ENCODE measurements at regions of chr6 and their contacts with region 1.

Region 1: DNA sequence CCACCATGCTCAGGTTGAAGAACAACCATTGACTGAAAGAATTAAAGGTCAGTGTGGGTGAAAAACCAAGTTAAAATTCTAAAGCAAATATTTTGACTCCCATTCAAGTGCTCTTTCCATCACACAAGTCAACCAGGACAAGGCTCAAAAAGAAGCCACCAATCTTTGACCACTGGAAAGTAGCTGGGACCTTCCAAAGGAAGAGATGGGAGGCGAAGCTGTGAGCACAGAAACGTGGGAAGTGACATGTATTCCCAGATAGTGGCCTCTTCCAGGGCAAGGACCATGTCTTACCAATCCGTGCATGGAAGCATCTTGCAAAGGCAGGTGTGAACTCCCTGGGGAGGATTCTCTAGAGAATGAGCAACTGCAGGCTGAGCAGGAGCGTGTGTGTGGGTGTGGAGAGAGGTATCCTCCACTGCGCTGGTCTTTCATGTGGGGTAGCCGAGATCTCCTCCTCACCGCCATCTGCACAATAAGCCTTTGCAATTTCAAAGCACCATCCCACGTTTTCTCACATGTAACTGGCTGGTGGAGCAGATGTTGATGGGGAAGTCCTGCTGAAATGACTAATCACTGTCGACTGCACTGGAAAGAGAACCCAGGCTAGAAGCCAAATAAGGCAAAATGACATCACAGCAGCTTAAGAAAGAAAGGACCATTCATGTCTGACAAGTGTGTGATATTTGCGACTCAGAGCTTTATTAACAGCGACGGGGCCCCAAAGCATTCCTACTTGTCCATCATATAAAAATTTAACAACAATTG is 189.4 kb upstream of the RREB1 start:
- DNase-seq: peak; percentile 44
- H3K4me3 Mint-ChIP-seq: no peak overlapping the region
- H3K27ac Mint-ChIP-seq: peak overlapping the region; percentile 55
- H3K4me1 Mint-ChIP-seq: peaks cover 37% of the 10 kb centered on the region
- H3K27me3 Mint-ChIP-seq: peaks cover 18% of the 10 kb centered on the region

Region 2: DNA sequence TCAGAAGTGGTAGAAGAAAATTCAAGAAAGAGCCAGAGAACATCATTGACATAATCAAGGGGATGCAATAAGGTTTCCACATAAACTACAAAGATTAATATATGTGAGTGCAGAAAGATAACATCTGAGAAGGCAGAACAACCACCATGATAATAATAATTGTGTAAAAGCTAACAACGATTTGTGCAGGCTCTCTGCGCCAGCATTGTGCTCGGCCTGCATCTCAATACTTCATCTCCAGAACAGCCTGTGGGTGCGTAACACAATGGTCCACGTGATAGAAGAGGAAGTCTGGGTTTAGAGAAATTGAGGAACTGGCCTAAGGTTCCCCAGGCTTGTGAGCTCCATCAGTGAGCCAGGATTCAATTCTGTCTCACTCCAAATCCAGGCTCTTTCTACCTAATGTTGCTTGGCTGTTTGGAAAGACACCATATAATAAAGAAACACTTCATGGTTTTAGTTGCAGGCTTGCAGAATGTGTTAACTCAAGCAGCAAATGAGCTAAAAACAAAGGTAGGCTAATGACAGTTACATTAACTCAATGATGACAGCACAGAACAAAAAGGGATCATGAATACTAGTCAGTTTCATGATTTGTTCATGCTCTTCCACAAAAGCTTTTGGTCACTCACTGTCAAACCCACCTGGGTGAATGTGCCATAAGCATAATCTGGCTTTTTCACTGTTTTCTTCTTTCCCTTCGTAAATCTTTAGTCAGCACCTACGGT is 258.6 kb before region 1 on chr6:
- intact Hi-C with region 1: loop called (anchors 1 kb)
- DNase-seq: no peak
- H3K4me3 Mint-ChIP-seq: no peak overlapping the region
- H3K27ac Mint-ChIP-seq: peak overlapping the region; percentile 89
- H3K4me1 Mint-ChIP-seq: peaks cover 84% of the 10 kb centered on the region
- H3K27me3 Mint-ChIP-seq: no peaks in the 10 kb centered on the region

Region 3: DNA sequence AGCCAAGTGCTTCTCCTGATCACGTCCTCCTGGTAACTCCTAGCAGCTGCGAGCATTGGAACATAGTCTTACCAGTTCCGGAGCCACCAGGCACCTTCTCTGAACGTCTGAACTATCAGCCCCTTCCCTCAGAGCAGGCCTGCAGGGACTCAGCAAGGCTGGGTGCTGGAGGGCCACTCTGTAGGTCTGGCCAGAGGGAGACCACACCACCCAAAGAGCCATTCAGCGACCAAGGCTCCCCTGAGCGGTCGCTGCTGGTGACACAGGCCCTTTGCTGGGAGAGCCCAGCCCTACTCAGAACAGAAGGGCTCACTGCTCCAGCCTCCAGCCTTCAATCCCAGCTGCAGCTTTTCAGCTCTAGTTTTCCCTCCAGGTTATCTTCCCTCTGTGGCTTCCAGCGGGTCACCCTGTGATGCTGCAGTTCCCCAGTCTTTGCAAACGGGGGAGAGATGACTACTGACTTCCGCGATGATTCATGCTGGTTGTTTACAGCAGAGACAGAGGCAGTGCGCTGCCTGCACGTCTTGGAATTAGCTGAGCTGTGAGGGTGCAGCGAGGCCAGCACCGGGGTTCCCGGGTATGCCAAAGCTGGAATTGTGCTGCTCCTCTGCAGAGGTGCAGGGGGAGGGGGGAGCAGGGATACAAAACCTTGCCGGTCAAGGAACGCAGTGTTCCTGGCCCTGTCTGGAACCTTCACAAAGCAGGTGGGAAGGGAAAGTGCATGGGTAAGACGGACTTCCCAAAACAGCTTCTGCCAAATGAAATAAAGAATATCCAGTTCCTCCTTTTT is 168.5 kb before region 1 on chr6:
- intact Hi-C with region 1: loop called (anchors 1 kb)
- DNase-seq: peak; percentile 42
- H3K4me3 Mint-ChIP-seq: peak overlapping the region; percentile 67
- H3K27ac Mint-ChIP-seq: peak overlapping the region; percentile 61
- H3K4me1 Mint-ChIP-seq: peaks cover 30% of the 10 kb centered on the region
- H3K27me3 Mint-ChIP-seq: peaks cover 13% of the 10 kb centered on the region

Region 4: GRCh38 chr6:6856538-6857523 is 61.6 kb before region 1 on chr6:
- intact Hi-C with region 1: loop called (anchors 1 kb)
- DNase-seq: peak; percentile 45
- H3K4me3 Mint-ChIP-seq: peak overlapping the region; percentile 65
- H3K27ac Mint-ChIP-seq: peak overlapping the region; percentile 89
- H3K4me1 Mint-ChIP-seq: peaks cover 42% of the 10 kb centered on the region
- H3K27me3 Mint-ChIP-seq: peaks cover 8% of the 10 kb centered on the region

Region 5: GRCh38 chr6:7107578-7108195 is 189.3 kb after region 1 on chr6 and contains the start of gene RREB1:
- intact Hi-C with region 1: loop called (anchors 1 kb)
- DNase-seq: peak; percentile 34
- H3K4me3 Mint-ChIP-seq: peak within 1 kb of the TSS; percentile 96
- H3K27ac Mint-ChIP-seq: peak within 1 kb of the TSS; percentile 92
- H3K4me1 Mint-ChIP-seq: peaks cover 41% of the 10 kb centered on the region
- H3K27me3 Mint-ChIP-seq: peaks cover 21% of the 10 kb centered on the region
- total RNA-seq, gene RREB1: 12.3 and 12.7 TPM in 2 replicates